ENCODE measurements at regions of chr6 and their contacts with region 1.

Region 1: GRCh38 chr6:110815217-110816109 is at the start of gene CDK19:
- DNase-seq: peak; percentile 100
- H3K4me3 Mint-ChIP-seq: peak within 1 kb of the TSS; percentile 98
- H3K27ac Mint-ChIP-seq: peak within 1 kb of the TSS; percentile 95
- H3K4me1 Mint-ChIP-seq: peaks cover 8% of the 10 kb centered on the region
- H3K27me3 Mint-ChIP-seq: no peaks in the 10 kb centered on the region
- CTCF ChIP-seq: no peak
- total RNA-seq, gene CDK19: 10.2 and 16.8 TPM in 2 replicates

Region 2: DNA sequence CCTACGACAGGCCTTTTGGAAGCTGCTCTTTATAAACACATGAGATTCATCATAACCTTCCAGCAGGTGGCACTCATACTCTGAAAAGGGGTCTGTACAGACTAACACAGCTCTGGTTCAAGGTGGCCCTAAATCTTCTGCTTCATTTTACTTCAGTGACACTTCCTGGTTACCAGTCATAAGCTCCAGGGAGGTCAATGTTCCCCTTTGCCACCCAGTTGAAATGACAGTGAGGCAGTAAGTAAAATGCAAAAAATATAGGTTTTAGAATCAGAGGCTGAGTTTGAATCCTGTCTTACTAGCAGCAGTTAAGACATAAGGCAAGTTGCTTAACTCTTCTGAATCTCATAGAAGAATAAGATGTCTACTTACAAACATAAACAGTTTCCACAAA is 133.0 kb before region 1 on chr6:
- CTCF ChIA-PET with region 1: interaction called, 7 read pairs
- POLR2A ChIA-PET with region 1: interaction called, 13 read pairs
- intact Hi-C with region 1: loop called (anchors 2 kb)
- DNase-seq: peak; percentile 87
- H3K4me3 Mint-ChIP-seq: no peak overlapping the region
- H3K27ac Mint-ChIP-seq: no peak overlapping the region
- H3K4me1 Mint-ChIP-seq: no peaks in the 10 kb centered on the region
- H3K27me3 Mint-ChIP-seq: no peaks in the 10 kb centered on the region
- CTCF ChIP-seq: peak; percentile 74

Region 3: DNA sequence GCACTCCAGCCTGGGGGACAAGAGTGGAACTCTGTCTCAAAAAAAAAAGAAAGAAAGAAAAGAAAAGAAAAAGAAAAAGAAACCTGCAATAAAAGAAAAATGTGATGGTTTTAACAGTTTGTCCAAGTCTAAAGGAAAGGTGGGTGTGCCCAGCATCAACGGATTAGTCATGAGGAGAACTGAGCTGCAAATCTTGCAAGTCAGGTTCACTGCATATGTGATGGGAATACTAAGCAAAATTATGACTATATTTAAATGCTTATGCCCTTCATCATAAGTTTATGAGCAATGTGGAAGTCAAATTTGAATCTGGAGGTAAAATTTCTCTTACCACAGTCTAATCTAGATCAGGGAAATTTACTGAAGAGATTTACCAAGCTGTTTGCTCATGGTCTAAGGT is 12.9 kb after region 1 on chr6:
- CTCF ChIA-PET with region 1: no interaction called
- POLR2A ChIA-PET with region 1: interaction called, 10 read pairs
- intact Hi-C with region 1: no loop called
- DNase-seq: no peak
- H3K4me3 Mint-ChIP-seq: no peak overlapping the region
- H3K27ac Mint-ChIP-seq: no peak overlapping the region
- H3K4me1 Mint-ChIP-seq: no peaks in the 10 kb centered on the region
- H3K27me3 Mint-ChIP-seq: no peaks in the 10 kb centered on the region
- CTCF ChIP-seq: no peak

Region 4: DNA sequence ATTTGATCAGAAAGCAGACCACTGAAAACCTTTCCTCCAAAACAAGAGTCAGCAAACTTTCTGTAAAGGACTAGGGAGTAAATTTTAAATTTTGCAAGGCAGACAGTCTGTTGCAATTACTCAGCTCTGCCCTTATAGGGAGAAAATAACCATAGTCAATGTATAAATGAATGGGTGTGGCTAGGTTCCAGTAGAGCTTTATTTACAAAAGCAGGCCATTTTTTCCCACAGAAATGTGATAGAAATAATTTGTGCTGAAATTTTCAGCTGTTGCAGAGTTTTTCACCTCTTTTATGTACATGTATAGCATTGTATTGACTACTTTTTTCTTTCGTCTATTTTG is 66.8 kb after region 1 on chr6:
- CTCF ChIA-PET with region 1: interaction called, 57 read pairs
- POLR2A ChIA-PET with region 1: interaction called, 613 read pairs
- intact Hi-C with region 1: no loop called
- DNase-seq: no peak
- H3K4me3 Mint-ChIP-seq: no peak overlapping the region
- H3K27ac Mint-ChIP-seq: no peak overlapping the region
- H3K4me1 Mint-ChIP-seq: peaks cover 46% of the 10 kb centered on the region
- H3K27me3 Mint-ChIP-seq: no peaks in the 10 kb centered on the region
- CTCF ChIP-seq: no peak

Region 5: GRCh38 chr6:110958329-110959192 is 143.1 kb after region 1 on chr6 and contains the start of gene GTF3C6:
- CTCF ChIA-PET with region 1: interaction called, 3 read pairs
- POLR2A ChIA-PET with region 1: interaction called, 12 read pairs
- intact Hi-C with region 1: no loop called
- DNase-seq: peak; percentile 92
- H3K4me3 Mint-ChIP-seq: peak within 1 kb of the TSS; percentile 99
- H3K27ac Mint-ChIP-seq: peak within 1 kb of the TSS; percentile 100
- H3K4me1 Mint-ChIP-seq: no peaks in the 10 kb centered on the region
- H3K27me3 Mint-ChIP-seq: no peaks in the 10 kb centered on the region
- CTCF ChIP-seq: no peak
- total RNA-seq, gene GTF3C6: 96.8 and 96.9 TPM in 2 replicates

Measured in MCF 10A (cell line).